ENCODE measurements at regions of chr5 and their contacts with region 1.

Region 1: DNA sequence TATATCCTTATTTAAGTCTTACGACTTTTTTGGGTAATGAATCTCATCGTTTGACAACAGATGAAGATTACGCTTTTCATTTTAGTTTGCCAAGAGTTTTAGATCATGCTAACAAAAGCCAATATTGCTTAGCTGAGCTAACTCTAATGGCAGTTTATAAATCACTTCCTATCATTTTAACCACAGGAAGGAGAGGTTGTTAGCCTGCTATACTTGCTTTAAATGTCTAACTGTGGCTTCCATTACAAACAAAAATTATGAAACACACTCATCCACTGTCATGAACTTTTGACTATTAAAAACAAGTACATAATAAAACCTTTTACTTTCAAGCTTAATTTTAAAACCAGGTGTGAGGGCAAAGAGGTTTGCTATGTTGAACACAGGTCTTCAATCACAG is 53.7 kb upstream of the ANKH start:
- DNase-seq: no peak
- H3K4me3 Mint-ChIP-seq: peak overlapping the region; percentile 15
- H3K27ac Mint-ChIP-seq: peak overlapping the region; percentile 78
- H3K4me1 Mint-ChIP-seq: peaks cover 58% of the 10 kb centered on the region
- H3K27me3 Mint-ChIP-seq: peaks cover 2% of the 10 kb centered on the region

Region 2: DNA sequence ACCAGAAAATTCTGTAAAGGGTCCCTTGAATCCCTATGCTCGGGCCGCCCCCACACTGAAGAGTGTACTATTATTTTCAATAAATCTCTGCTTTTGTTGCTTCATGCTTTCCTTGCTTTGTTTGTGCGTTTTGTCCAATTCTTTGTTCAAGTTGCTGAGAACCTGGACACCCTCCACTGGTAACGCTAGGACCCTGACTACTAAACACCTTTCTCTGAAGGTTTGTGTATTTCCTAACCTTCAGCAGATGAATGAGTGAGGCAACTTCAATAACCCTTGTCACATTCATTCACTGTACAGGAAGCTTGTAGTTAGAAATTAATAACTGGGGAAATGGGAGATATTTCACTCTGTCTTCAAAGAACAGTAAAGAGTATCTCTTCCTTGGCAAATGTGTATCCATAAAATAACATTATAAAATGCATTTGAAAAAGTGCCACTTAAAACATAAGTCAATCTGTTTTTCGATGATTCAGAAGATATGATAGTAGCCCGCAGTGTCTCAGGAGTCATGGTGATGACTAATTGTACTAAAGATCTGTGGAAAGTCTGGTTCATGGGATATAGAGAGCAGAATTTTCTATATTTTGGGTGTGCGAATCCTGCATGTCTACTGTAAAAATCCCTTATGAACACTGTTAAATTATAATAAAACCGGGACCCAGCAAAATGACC is 10.6 kb before region 1 on chr5:
- intact Hi-C with region 1: loop called (anchors 1 kb)
- DNase-seq: no peak
- H3K4me3 Mint-ChIP-seq: no peak overlapping the region
- H3K27ac Mint-ChIP-seq: peak overlapping the region; percentile 40
- H3K4me1 Mint-ChIP-seq: peaks cover 7% of the 10 kb centered on the region
- H3K27me3 Mint-ChIP-seq: peaks cover 7% of the 10 kb centered on the region

Region 3: GRCh38 chr5:14996997-14997396 is 71.7 kb after region 1 on chr5:
- intact Hi-C with region 1: loop called (anchors 1 kb)
- DNase-seq: no peak
- H3K4me3 Mint-ChIP-seq: no peak overlapping the region
- H3K27ac Mint-ChIP-seq: no peak overlapping the region
- H3K4me1 Mint-ChIP-seq: peaks cover 38% of the 10 kb centered on the region
- H3K27me3 Mint-ChIP-seq: peaks cover 2% of the 10 kb centered on the region

Region 4: DNA sequence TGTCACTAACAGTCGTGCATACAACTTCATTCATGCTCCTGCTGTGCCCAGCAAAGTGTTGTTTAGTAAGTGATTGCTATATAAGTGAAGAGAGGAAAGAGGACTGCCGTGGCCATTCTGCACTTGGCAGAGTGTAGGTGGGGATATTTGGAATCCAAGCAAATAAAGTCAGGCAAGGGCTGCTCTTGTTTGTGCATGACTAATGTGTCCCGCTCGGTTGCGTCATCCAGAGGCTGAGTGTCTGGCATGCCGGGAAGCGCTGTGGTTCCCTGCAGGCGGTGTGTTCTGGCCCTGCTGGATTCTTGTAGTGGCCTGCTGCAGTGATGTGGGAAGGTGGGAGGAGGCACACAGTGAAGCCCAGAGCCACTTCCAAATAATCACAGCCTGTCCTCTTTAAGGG is 83.2 kb after region 1 on chr5:
- intact Hi-C with region 1: no loop called
- DNase-seq: no peak
- H3K4me3 Mint-ChIP-seq: no peak overlapping the region
- H3K27ac Mint-ChIP-seq: no peak overlapping the region
- H3K4me1 Mint-ChIP-seq: no peaks in the 10 kb centered on the region
- H3K27me3 Mint-ChIP-seq: peaks cover 24% of the 10 kb centered on the region